ENCODE measurements at regions of chr6 and their contacts with region 1.

Region 1: DNA sequence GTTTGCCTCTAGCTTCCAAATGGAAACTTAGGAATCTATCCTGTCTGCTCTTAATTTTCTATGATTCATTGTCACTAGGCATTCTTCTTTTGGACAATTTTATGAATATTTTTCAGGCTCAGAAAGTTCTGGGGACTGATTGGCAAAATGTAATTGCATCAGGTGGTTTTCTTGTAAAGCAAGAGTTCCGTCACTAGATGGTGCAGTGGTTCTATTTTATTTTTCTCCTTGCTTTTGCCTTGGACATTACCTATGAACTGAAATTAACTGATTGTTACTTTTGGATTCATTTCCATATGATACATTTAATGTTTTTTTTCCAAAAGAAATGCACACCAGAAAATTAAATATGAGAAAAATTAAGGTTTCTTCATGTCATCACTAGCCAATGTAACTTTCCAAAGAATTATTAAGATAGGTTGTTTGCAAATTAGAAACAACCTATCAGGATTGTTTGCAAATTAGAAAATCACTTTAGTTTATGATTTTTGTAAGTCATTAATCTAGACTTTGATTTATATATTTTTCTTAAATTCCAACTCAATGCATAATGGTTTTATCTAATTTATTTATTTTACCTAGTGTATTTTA is 48.0 kb downstream of the TMEM170B start:
- DNase-seq: peak in 3 of 14 experiments; percentile 18 to 37 (median 35)
- ATAC-seq: no peak
- H3K4me3 ChIP-seq: no peak overlapping the region
- H3K4me3 Mint-ChIP-seq: no peak overlapping the region
- H3K27ac ChIP-seq: no peak overlapping the region
- H3K27ac Mint-ChIP-seq: no peak overlapping the region
- H3K4me1 ChIP-seq: no peaks in the 10 kb centered on the region
- H3K4me1 Mint-ChIP-seq: no peaks in the 10 kb centered on the region
- H3K27me3 ChIP-seq: no peaks in the 10 kb centered on the region
- H3K27me3 Mint-ChIP-seq: no peaks in the 10 kb centered on the region
- CTCF ChIP-seq: peak; percentile 50

Region 2: DNA sequence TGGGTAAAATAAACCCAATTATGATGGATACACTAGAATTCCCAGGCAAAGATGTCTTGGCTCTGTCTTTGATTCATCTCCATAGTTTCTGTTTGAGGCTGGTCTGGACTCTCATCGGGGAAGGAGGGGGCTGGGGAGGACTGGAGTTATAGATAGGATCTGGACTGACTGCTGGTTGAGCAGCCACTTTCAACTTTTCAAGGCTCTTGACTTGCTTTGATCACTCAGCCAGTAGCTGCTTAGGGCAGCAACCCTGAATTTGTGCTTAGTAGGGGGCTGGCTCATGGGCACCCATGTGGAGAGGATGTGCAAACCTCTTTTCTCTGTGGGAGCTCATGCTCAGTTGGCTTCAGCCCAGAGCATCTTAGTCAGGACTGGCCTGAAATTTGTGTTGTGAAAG is 239.0 kb before region 1 on chr6:
- CTCF ChIA-PET with region 1: no interaction called
- POLR2A ChIA-PET with region 1: no interaction called
- intact Hi-C with region 1: no loop called
- DNase-seq: no peak
- ATAC-seq: no peak
- H3K4me3 ChIP-seq: no peak overlapping the region
- H3K4me3 Mint-ChIP-seq: no peak overlapping the region
- H3K27ac ChIP-seq: no peak overlapping the region
- H3K27ac Mint-ChIP-seq: no peak overlapping the region
- H3K4me1 ChIP-seq: peaks cover 21% of the 10 kb centered on the region
- H3K4me1 Mint-ChIP-seq: peaks cover 88% of the 10 kb centered on the region
- H3K27me3 ChIP-seq: no peaks in the 10 kb centered on the region
- H3K27me3 Mint-ChIP-seq: no peaks in the 10 kb centered on the region
- CTCF ChIP-seq: no peak

Region 3: GRCh38 chr6:12605888-12606345 is 1020.4 kb after region 1 on chr6:
- CTCF ChIA-PET with region 1: no interaction called
- POLR2A ChIA-PET with region 1: no interaction called
- intact Hi-C with region 1: loop called in 1 of 2 experiments (anchors 5 kb)
- DNase-seq: peak in 7 of 14 experiments; percentile 3 to 63 (median 34)
- ATAC-seq: no peak
- H3K4me3 ChIP-seq: no peak overlapping the region
- H3K4me3 Mint-ChIP-seq: no peak overlapping the region
- H3K27ac ChIP-seq: no peak overlapping the region
- H3K27ac Mint-ChIP-seq: no peak overlapping the region
- H3K4me1 ChIP-seq: no peaks in the 10 kb centered on the region
- H3K4me1 Mint-ChIP-seq: no peaks in the 10 kb centered on the region
- H3K27me3 ChIP-seq: peaks cover 0 to 9% of the 10 kb centered on the region in 2 experiments
- H3K27me3 Mint-ChIP-seq: peaks cover 27% of the 10 kb centered on the region
- CTCF ChIP-seq: peak; percentile 50

Region 4: DNA sequence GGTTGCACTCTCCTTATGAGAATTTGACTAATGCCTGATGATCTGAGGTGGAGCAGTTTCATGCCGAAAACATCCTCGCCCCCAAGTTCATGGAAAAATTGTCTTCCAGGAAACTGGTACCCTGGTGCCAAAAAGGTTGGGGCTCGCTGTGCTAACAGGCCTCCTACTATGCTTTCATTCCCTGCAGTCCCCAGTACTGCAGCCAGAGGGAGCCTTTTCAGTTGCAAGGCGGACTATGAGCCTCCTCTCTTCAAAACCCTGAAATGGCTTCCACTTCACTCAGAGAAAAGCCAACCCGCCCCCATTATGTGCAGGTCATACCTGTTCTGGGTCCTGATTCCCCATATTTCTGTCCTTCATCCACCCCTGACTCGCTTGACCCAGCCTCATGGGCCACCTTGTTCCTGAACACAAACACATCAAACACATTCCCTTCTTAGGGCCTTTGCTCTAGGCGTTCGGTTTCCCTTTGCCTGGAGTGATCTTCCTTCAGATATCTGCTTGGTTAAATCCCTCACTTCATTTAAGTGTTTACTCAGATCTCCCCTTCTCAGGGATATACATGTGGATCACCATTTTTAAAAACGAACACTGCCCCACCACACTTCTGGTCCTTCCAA is 1304.8 kb after region 1 on chr6:
- CTCF ChIA-PET with region 1: no interaction called
- POLR2A ChIA-PET with region 1: no interaction called
- intact Hi-C with region 1: loop called (anchors 5 kb)
- DNase-seq: peak in 4 of 14 experiments; percentile 1 to 20 (median 9)
- ATAC-seq: no peak
- H3K4me3 ChIP-seq: no peak overlapping the region
- H3K4me3 Mint-ChIP-seq: no peak overlapping the region
- H3K27ac ChIP-seq: no peak overlapping the region
- H3K27ac Mint-ChIP-seq: no peak overlapping the region
- H3K4me1 ChIP-seq: peaks cover 2% of the 10 kb centered on the region
- H3K4me1 Mint-ChIP-seq: no peaks in the 10 kb centered on the region
- H3K27me3 ChIP-seq: peaks cover 0 to 8% of the 10 kb centered on the region in 2 experiments
- H3K27me3 Mint-ChIP-seq: peaks cover 27% of the 10 kb centered on the region
- CTCF ChIP-seq: no peak

Measured in CD4-positive, alpha-beta T cell (primary cell).